Calu3 (cell line): ENCODE measurements at regions of chr18 and their contacts with region 1.

Region 1: GRCh38 chr18:53796040-53796729 is 428.3 kb downstream of the MBD2 start:
- DNase-seq: no peak
- H3K4me3 Mint-ChIP-seq: no peak overlapping the region
- H3K27ac Mint-ChIP-seq: peak overlapping the region; percentile 63
- H3K4me1 Mint-ChIP-seq: peaks cover 30% of the 10 kb centered on the region
- H3K27me3 Mint-ChIP-seq: no peaks in the 10 kb centered on the region
- CTCF ChIP-seq: no peak

Region 2: GRCh38 chr18:52254367-52254766 is 1541.8 kb before region 1 on chr18:
- CTCF ChIA-PET with region 1: no interaction called
- intact Hi-C with region 1: no loop called
- DNase-seq: no peak
- H3K4me3 Mint-ChIP-seq: no peak overlapping the region
- H3K27ac Mint-ChIP-seq: no peak overlapping the region
- H3K4me1 Mint-ChIP-seq: no peaks in the 10 kb centered on the region
- H3K27me3 Mint-ChIP-seq: no peaks in the 10 kb centered on the region
- CTCF ChIP-seq: no peak

Region 3: DNA sequence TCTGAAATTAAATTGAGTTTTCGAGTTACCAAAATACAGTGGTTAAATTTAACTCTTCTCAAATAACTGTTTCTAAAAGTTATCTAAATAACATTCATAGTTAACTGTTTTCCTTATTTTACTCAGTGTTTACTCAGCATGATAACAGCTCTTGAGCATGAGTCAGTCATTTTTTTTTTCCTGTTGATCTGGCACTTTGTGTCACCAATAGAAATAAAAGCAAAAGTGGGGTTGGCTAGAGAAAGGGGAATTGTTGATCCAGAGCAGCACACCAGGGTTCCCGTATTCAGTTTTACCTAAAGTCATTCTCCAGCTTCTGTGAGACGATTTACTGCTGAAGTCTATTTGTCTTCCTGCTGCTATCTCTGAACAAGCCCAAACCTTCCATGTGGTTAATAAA is 604.6 kb before region 1 on chr18:
- CTCF ChIA-PET with region 1: no interaction called
- intact Hi-C with region 1: no loop called
- DNase-seq: no peak
- H3K4me3 Mint-ChIP-seq: no peak overlapping the region
- H3K27ac Mint-ChIP-seq: no peak overlapping the region
- H3K4me1 Mint-ChIP-seq: no peaks in the 10 kb centered on the region
- H3K27me3 Mint-ChIP-seq: no peaks in the 10 kb centered on the region
- CTCF ChIP-seq: no peak

Region 4: DNA sequence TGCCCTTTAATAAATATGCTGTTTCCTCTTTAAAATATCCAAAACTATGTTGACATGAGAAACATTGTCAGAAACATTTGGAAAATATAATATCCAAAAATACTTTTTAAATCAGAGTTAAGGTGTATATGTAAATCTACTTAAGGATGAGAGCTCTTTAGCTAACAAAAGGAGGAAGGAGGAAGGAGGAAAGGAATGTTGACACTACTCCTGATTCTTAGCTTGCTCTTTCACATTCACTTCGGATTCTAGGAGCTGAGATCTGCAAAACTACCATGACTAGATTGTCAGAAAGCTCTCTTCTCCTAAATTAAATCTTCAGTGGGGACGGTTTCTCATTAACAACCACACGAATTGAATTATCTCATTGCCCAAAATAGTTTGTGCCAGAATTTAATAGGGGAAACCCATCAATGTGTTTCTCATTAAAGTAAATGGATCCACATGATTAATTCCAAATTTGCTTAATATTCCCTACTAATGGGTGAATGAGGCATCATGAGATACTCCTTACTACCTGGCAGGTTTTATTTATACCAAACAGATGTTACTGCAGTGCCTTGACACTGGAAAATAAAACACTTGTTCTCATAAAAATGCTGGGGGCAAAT is 80.8 kb before region 1 on chr18:
- CTCF ChIA-PET with region 1: no interaction called
- intact Hi-C with region 1: loop called (anchors 10 kb)
- DNase-seq: no peak
- H3K4me3 Mint-ChIP-seq: no peak overlapping the region
- H3K27ac Mint-ChIP-seq: no peak overlapping the region
- H3K4me1 Mint-ChIP-seq: no peaks in the 10 kb centered on the region
- H3K27me3 Mint-ChIP-seq: no peaks in the 10 kb centered on the region
- CTCF ChIP-seq: no peak

Region 5: GRCh38 chr18:53757328-53757727 is 38.9 kb before region 1 on chr18:
- CTCF ChIA-PET with region 1: no interaction called
- intact Hi-C with region 1: no loop called
- DNase-seq: no peak
- H3K4me3 Mint-ChIP-seq: no peak overlapping the region
- H3K27ac Mint-ChIP-seq: no peak overlapping the region
- H3K4me1 Mint-ChIP-seq: no peaks in the 10 kb centered on the region
- H3K27me3 Mint-ChIP-seq: no peaks in the 10 kb centered on the region
- CTCF ChIP-seq: no peak

Region 6: GRCh38 chr18:53850918-53851317 is 54.7 kb after region 1 on chr18:
- CTCF ChIA-PET with region 1: no interaction called
- intact Hi-C with region 1: loop called (anchors 10 kb)
- DNase-seq: no peak
- H3K4me3 Mint-ChIP-seq: no peak overlapping the region
- H3K27ac Mint-ChIP-seq: no peak overlapping the region
- H3K4me1 Mint-ChIP-seq: no peaks in the 10 kb centered on the region
- H3K27me3 Mint-ChIP-seq: no peaks in the 10 kb centered on the region
- CTCF ChIP-seq: no peak

Region 7: DNA sequence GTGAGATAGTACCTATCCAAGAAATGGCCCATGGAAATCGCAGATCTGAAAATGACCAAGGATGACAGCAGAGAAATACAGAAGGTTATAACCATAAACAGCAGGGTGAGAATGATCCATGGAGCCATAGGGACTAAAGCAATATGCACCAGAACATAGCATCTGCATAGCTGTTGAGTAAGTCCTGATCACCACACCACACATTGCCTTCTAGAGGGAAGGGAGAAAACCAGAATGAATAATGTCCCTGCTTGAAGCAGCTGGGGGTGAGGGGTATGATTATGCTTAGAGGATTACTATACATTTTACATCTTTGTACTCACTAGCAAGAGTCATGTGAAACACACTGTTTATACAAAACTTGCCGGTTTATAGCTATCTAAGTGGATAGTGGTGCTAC is 77.9 kb after region 1 on chr18:
- CTCF ChIA-PET with region 1: no interaction called
- intact Hi-C with region 1: no loop called
- DNase-seq: no peak
- H3K4me3 Mint-ChIP-seq: no peak overlapping the region
- H3K27ac Mint-ChIP-seq: no peak overlapping the region
- H3K4me1 Mint-ChIP-seq: no peaks in the 10 kb centered on the region
- H3K27me3 Mint-ChIP-seq: no peaks in the 10 kb centered on the region
- CTCF ChIP-seq: no peak